Activated CD8-positive, alpha-beta T cell treated with anti-CD3 and anti-CD28 coated beads, Interleukin-2, amount 10 ng/mL, durations not matched to agents 7 days and 5 days (primary cell): ENCODE measurements at regions of chr11 and their contacts with region 1.

Region 1: GRCh38 chr11:12224537-12224893 is 114.1 kb downstream of the MICAL2 start:
- DNase-seq: peak; percentile 96
- ATAC-seq: peak; percentile 94
- H3K4me3 Mint-ChIP-seq: peak overlapping the region; percentile 60
- H3K27ac Mint-ChIP-seq: peak overlapping the region; percentile 97
- H3K4me1 Mint-ChIP-seq: peaks cover 51% of the 10 kb centered on the region
- H3K27me3 Mint-ChIP-seq: no peaks in the 10 kb centered on the region

Region 2: DNA sequence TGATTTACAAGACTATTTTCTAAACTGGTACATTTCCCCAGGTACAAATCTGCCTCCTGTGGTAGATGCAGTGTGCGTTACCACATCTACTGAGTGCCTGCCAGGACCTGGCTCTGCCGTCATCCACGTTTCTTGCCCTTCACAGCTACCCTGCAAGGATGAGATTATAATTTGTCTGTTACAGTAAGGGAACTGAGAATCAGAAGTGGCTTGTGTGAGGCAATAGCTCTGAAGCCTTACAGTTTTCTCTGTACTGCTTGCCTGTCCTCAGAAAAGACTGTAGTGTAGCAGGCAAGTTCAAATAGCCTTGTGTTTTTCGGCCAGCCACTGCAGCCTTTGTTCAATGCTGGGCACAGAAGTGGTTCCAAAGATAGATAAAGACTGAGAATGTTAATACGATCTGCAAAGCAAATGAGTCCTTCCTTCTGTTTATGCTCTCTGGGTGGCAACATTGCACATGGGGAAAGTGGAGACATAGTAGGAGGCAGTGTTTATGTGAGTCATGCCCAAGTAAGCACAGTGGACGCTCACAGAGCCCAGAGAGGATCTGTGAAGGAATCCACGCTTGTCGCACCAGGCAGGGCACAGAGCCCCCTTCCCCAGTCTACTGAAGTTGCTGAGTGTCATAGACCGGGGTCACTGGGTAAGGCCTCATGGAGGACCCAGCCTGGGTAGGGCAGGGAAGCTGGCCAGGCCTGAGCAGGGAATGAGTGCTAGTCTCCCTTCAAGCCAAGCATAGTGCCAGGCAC is 65.0 kb before region 1 on chr11:
- CTCF ChIA-PET with region 1: interaction called, 19 read pairs
- POLR2A ChIA-PET with region 1: interaction called, 8 read pairs
- DNase-seq: no peak
- ATAC-seq: no peak
- H3K4me3 Mint-ChIP-seq: no peak overlapping the region
- H3K27ac Mint-ChIP-seq: no peak overlapping the region
- H3K4me1 Mint-ChIP-seq: peaks cover 62% of the 10 kb centered on the region
- H3K27me3 Mint-ChIP-seq: no peaks in the 10 kb centered on the region

Region 3: GRCh38 chr11:12189543-12190235 is 34.8 kb before region 1 on chr11:
- CTCF ChIA-PET with region 1: interaction called, 47 read pairs
- POLR2A ChIA-PET with region 1: interaction called, 42 read pairs
- DNase-seq: no peak
- ATAC-seq: peak; percentile 62
- H3K4me3 Mint-ChIP-seq: no peak overlapping the region
- H3K27ac Mint-ChIP-seq: peak overlapping the region; percentile 23
- H3K4me1 Mint-ChIP-seq: peaks cover 45% of the 10 kb centered on the region
- H3K27me3 Mint-ChIP-seq: no peaks in the 10 kb centered on the region

Region 4: DNA sequence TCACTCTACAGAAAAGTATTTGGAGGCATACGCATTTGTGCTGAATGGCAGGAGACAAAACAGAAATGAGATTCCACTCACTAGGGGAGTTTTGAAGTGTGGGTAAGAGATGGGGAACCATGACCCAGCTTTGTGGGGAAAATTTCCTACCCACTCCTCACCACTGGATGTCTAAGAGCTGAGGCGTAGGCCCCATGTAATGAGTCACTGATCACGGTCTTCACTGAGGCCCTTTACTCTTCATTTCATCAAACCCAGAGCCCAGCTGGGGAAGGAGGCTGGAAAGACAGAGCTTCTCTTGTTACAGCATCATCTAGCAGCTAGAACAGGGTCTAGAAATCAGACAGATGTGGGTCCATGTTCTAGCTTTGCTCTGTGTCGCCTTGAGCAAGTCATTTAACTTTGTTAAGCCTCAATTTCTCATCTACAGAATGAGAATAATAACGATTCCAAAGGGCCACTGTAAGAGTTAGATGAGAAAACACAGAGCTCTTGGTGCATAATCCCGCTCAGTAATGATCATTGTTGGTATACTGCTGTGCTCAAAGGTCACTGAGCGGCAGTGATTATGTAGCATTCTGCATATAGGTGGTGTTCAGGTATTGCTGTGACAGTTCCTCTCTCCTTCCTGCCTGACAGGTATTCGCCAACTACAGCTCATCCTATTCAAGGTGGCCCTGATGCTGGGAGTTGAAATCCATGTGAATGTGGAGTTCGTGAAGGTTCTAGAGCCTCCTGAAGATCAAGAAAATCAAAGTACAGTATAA is 16.9 kb before region 1 on chr11:
- CTCF ChIA-PET with region 1: interaction called, 18 read pairs
- POLR2A ChIA-PET with region 1: interaction called, 5 read pairs
- DNase-seq: no peak
- ATAC-seq: no peak
- H3K4me3 Mint-ChIP-seq: no peak overlapping the region
- H3K27ac Mint-ChIP-seq: no peak overlapping the region
- H3K4me1 Mint-ChIP-seq: peaks cover 14% of the 10 kb centered on the region
- H3K27me3 Mint-ChIP-seq: no peaks in the 10 kb centered on the region

Region 5: GRCh38 chr11:12318791-12319438 is 94.4 kb after region 1 on chr11:
- CTCF ChIA-PET with region 1: no interaction called
- POLR2A ChIA-PET with region 1: no interaction called
- DNase-seq: no peak
- ATAC-seq: no peak
- H3K4me3 Mint-ChIP-seq: no peak overlapping the region
- H3K27ac Mint-ChIP-seq: no peak overlapping the region
- H3K4me1 Mint-ChIP-seq: peaks cover 17% of the 10 kb centered on the region
- H3K27me3 Mint-ChIP-seq: peaks cover 4% of the 10 kb centered on the region

Region 6: GRCh38 chr11:12397931-12398334 is 173.4 kb after region 1 on chr11:
- CTCF ChIA-PET with region 1: no interaction called
- POLR2A ChIA-PET with region 1: no interaction called
- DNase-seq: no peak
- ATAC-seq: no peak
- H3K4me3 Mint-ChIP-seq: no peak overlapping the region
- H3K27ac Mint-ChIP-seq: no peak overlapping the region
- H3K4me1 Mint-ChIP-seq: no peaks in the 10 kb centered on the region
- H3K27me3 Mint-ChIP-seq: no peaks in the 10 kb centered on the region